Adrenal gland (tissue), 19 donors: ENCODE measurements at regions of chr11 and their contacts with region 1.

Region 1: DNA sequence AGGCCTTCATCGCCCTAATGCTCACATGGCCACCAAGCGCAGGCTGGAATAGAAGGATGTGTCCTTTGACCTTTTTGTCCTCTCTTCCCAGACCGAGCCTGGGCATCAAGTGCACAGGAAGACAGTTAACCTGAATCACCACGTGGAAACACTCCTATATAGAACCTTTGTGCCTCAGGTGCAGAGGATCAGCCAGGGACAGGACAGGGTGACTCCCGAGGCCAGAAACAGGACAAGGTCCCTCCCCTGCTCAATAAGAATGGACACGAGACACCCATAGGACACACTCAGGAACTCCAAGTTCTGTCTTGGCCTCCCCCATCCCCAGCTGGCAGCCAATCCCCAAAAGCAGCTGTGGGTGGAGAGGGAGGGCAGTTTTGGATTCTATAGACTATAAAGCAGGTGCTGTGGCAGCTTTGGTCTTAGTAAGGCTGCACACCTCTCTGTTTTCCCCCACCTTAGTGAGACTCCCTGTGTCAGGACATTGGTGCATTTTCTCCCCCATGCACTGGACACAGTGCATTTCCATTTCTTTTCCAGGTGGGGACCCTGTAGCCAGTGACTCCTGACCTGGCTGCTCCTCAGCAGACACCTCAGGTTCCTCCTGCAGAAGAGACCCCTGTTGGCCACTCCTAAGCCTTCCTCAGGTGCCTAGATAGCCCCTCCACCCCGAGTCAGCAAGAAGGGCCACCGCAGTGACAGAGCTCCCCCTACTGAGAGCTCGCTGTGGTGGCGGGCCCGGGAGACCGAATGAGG is 43.6 kb upstream of the POU2AF1 start:
- DNase-seq: peak; percentile 53 to 71 (median 62)
- H3K4me3 ChIP-seq: no peak overlapping the region
- H3K27ac ChIP-seq: no peak overlapping the region
- H3K4me1 ChIP-seq: no peaks in the 10 kb centered on the region
- H3K27me3 ChIP-seq: no peaks in the 10 kb centered on the region
- CTCF ChIP-seq: peak; percentile 53 to 78 (median 74)
- POLR2A ChIP-seq: no peak

Region 2: GRCh38 chr11:111049131-111049530 is 373.5 kb before region 1 on chr11:
- intact Hi-C with region 1: no loop called
- DNase-seq: no peak
- H3K4me3 ChIP-seq: no peak overlapping the region
- H3K27ac ChIP-seq: no peak overlapping the region
- H3K4me1 ChIP-seq: no peaks in the 10 kb centered on the region
- H3K27me3 ChIP-seq: no peaks in the 10 kb centered on the region
- CTCF ChIP-seq: no peak
- POLR2A ChIP-seq: no peak

Region 3: GRCh38 chr11:111283945-111284481 is 138.7 kb before region 1 on chr11:
- intact Hi-C with region 1: loop called (anchors 2 to 5 kb)
- DNase-seq: no peak
- H3K4me3 ChIP-seq: no peak overlapping the region
- H3K27ac ChIP-seq: no peak overlapping the region
- H3K4me1 ChIP-seq: no peaks in the 10 kb centered on the region
- H3K27me3 ChIP-seq: no peaks in the 10 kb centered on the region
- CTCF ChIP-seq: no peak
- POLR2A ChIP-seq: no peak

Region 4: GRCh38 chr11:111299101-111300026 is 123.3 kb before region 1 on chr11:
- intact Hi-C with region 1: loop called (anchors 5 kb)
- DNase-seq: peak; percentile 67 to 77 (median 74)
- H3K4me3 ChIP-seq: peak overlapping the region in 3 of 4 donors; percentile 37 to 83 (median 60)
- H3K27ac ChIP-seq: peak overlapping the region in 2 of 5 donors; percentile 47 to 71
- H3K4me1 ChIP-seq: peaks cover 6 to 9% of the 10 kb centered on the region in 2 donors
- H3K27me3 ChIP-seq: no peaks in the 10 kb centered on the region
- CTCF ChIP-seq: peak; percentile 51 to 77 (median 66)
- POLR2A ChIP-seq: peak in 1 of 2 donors; percentile 35

Region 5: DNA sequence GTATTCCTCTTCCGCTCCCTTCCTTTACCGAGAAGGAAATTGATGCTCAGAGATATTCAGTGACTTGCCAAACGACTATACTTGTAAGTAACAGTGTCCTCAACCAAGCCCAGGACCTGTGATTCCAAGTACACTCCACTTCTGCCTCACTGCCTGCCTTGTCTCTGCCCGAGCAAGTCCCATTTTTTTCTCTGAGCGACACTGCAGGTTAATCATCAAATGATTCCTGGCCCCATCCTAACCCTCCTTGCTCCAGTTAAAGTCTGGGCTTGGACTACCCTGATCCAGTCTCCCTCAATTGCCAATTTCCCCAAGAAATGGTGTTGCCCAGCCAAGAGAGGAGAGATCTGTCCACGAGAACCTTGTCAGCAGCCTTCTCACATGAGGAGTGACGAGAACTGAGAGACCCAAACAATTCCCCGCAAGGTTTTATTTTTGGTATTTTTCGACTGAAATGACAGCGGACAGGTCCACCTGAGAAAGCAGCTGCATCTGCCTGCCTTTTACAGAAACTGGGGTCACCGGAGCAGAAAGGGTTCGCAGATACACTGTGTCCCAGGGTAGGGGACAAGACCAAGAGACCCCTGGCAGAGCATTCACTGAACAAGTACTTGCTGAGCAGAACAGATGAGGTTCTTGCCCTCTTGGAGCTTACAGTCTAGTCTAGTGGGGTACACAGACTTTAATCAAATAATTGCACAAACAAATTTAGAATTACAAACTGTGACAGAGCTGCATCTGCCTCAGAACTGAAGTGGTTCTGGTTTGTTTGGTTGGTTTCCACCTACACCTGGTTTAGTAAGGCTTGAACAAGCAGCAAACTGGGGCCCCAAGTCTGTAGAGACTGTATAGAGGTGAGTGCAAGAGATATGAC is 55.0 kb before region 1 on chr11:
- intact Hi-C with region 1: loop called in 1 of 2 experiments (anchors 10 kb)
- DNase-seq: no peak
- H3K4me3 ChIP-seq: no peak overlapping the region
- H3K27ac ChIP-seq: no peak overlapping the region
- H3K4me1 ChIP-seq: no peaks in the 10 kb centered on the region
- H3K27me3 ChIP-seq: no peaks in the 10 kb centered on the region
- CTCF ChIP-seq: no peak
- POLR2A ChIP-seq: no peak

Region 6: GRCh38 chr11:111623527-111624030 is 200.9 kb after region 1 on chr11:
- intact Hi-C with region 1: no loop called
- DNase-seq: no peak
- H3K4me3 ChIP-seq: no peak overlapping the region
- H3K27ac ChIP-seq: no peak overlapping the region
- H3K4me1 ChIP-seq: no peaks in the 10 kb centered on the region
- H3K27me3 ChIP-seq: no peaks in the 10 kb centered on the region
- CTCF ChIP-seq: no peak
- POLR2A ChIP-seq: no peak

Region 7: DNA sequence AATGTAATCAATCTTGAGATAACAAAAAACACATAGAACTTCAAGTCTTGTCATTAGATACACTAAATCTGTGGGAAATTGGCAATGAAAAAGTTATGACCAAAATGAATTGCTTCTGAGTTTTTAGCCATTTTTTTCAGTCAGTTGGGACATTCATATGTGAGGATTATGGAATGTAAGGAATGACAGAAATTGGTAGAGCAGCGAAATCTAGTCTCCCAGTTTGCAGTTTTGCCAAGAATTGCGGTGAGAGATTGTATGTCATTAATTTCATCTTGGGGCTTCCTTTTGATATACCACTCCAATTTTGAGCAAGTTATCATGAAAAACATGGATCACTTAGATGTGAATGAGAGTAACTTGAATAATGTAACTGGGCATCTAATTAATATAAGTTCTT is 229.5 kb after region 1 on chr11:
- intact Hi-C with region 1: no loop called
- DNase-seq: no peak
- H3K4me3 ChIP-seq: no peak overlapping the region
- H3K27ac ChIP-seq: no peak overlapping the region
- H3K4me1 ChIP-seq: no peaks in the 10 kb centered on the region
- H3K27me3 ChIP-seq: no peaks in the 10 kb centered on the region
- CTCF ChIP-seq: no peak
- POLR2A ChIP-seq: no peak